Naive thymus-derived CD4-positive, alpha-beta T cell (primary cell): ENCODE measurements at regions of chr16 and their contacts with region 1.

Region 1: DNA sequence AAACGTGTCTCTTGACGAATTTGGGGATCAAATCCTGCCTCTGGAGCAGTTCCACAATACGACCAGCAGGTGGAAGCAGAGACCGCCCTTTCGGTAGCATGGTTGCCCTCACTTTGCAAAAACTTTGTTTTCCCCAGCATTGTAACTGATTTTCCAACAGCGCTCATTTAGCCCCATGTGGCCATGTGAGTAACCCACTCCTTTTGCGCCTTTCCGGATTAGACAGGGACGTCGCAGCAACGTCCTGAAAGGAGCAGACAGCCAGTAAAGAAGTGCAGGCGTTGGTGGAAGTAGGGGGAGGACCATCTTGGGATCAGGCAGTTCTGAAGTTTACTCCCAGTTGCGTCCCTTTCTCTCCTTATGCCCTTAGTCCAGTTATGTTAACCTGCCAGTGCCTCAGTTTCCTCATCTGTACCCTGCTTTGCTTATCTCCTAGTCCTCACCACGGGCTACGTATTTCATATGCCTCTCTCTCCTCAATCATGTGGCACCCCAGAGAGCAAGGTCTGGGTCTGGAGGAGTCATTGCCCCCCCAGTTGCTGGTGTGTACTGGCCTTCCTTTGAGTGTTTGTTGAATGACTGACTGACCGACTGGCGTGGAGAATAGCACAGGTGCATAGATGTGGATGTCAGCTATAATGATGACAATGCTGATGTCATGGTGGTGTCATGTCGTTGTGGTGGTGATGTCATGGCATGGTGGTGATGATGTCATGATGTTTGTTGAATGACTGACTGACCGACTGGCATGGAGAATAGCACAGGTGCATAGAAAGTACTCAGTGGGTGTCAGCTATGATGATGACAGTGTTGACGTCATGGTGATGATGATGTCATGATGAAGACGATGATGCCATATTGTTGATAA is 22.3 kb downstream of the TMEM114 start:
- DNase-seq: peak; percentile 53 to 86 (median 79)
- ATAC-seq: peak; percentile 97
- H3K4me3 ChIP-seq: no peak overlapping the region
- H3K4me3 Mint-ChIP-seq: no peak overlapping the region
- H3K27ac ChIP-seq: no peak overlapping the region
- H3K27ac Mint-ChIP-seq: peak overlapping the region in 7 of 9 donors; percentile 10 to 69 (median 60)
- H3K4me1 ChIP-seq: no peaks in the 10 kb centered on the region
- H3K4me1 Mint-ChIP-seq: peaks cover 0 to 8% (median 4%) of the 10 kb centered on the region in 7 donors
- H3K27me3 ChIP-seq: no peaks in the 10 kb centered on the region
- H3K27me3 Mint-ChIP-seq: peaks cover 4 to 19% (median 11%) of the 10 kb centered on the region in 5 donors

Region 2: DNA sequence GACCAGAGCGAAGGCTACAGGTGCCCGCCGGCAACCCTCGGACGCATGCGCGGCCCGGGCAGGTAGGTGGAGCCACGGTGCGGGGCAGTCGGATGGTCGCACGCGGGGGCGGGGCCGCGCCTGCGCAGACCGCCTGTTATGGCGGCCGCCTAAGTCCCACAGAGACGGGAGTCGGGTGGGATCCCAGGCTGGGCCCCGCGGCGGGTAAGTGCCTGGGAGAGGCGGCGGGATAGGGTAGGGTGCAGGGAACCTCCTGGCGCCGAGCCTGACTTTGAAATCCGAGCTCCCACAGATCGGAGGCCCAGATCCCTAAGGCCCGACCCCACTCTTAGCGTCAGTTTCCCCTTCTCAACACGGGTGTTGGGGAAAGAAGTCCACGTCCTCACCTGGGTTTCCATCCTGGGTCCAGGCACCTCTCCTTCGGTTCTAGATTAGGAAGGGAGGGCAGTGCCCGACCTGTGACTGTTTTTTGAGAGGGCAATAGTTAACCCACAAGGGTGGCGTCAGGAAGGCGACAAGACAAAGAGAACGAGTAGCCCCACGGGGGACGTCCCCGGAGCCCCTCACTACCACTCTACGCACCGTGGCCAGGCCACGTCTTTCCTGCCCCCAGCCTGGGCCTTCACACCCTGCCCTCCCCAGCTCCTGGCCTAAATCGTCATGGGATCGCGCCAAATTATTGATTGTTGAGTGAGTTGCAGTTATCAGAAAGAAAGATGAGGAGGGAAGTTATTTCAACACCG is 53.8 kb after region 1 on chr16 and contains the start of gene METTL22:
- CTCF ChIA-PET with region 1: interaction called, 3 read pairs
- POLR2A ChIA-PET with region 1: no interaction called
- intact Hi-C with region 1: loop called in 1 of 2 experiments (anchors 1 kb)
- DNase-seq: peak; percentile 83 to 98 (median 90)
- ATAC-seq: peak; percentile 99
- H3K4me3 ChIP-seq: peak within 1 kb of the TSS; percentile 97
- H3K4me3 Mint-ChIP-seq: peak within 1 kb of the TSS; percentile 93 to 100 (median 95)
- H3K27ac ChIP-seq: peak within 1 kb of the TSS; percentile 92
- H3K27ac Mint-ChIP-seq: peak within 1 kb of the TSS; percentile 75 to 93 (median 87)
- H3K4me1 ChIP-seq: peaks cover 7 to 10% of the 10 kb centered on the region in 2 donors
- H3K4me1 Mint-ChIP-seq: peaks cover 17 to 40% (median 26%) of the 10 kb centered on the region in 7 donors
- H3K27me3 ChIP-seq: no peaks in the 10 kb centered on the region
- H3K27me3 Mint-ChIP-seq: peaks cover 0 to 17% (median 6%) of the 10 kb centered on the region in 5 donors
- total RNA-seq, gene METTL22: 28.9 to 59.4 (median 48.9) TPM

Region 3: GRCh38 chr16:8655184-8655717 is 87.3 kb after region 1 on chr16:
- CTCF ChIA-PET with region 1: no interaction called
- POLR2A ChIA-PET with region 1: no interaction called
- intact Hi-C with region 1: loop called (anchors 1 kb)
- DNase-seq: no peak
- ATAC-seq: peak; percentile 73
- H3K4me3 ChIP-seq: no peak overlapping the region
- H3K4me3 Mint-ChIP-seq: no peak overlapping the region
- H3K27ac ChIP-seq: no peak overlapping the region
- H3K27ac Mint-ChIP-seq: no peak overlapping the region
- H3K4me1 ChIP-seq: no peaks in the 10 kb centered on the region
- H3K4me1 Mint-ChIP-seq: no peaks in the 10 kb centered on the region
- H3K27me3 ChIP-seq: no peaks in the 10 kb centered on the region
- H3K27me3 Mint-ChIP-seq: no peaks in the 10 kb centered on the region

Region 4: DNA sequence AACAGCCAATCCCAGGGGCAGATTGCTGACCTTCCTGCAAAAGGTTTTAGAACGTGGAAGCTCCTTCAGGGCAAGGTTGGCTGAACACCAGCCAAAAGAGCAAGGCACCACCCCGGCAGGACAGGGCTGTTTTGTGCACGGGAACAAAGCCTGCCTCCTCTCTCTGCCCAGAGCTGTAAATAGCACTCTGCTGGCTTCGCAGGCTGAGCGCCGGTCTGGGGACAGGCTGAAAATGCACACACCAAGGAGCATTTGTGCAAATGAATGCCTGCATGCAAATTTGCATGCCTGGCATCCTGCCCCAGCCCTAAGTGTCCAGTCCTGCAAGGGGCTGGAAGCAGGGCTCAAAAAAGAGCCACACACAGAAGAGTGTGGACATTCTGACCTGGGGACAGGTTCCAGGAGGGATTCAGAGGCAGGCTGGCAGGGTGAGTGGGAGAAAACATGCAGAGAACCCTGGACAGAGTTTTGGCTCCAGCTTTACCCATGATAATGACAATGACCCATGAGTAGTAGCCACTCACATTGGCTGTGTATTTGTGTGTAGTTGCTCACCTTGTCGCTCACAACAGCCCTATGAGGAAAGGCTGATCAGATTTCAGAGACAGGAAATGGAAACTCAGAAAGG is 118.1 kb after region 1 on chr16:
- CTCF ChIA-PET with region 1: no interaction called
- POLR2A ChIA-PET with region 1: no interaction called
- intact Hi-C with region 1: no loop called
- DNase-seq: no peak
- ATAC-seq: no peak
- H3K4me3 ChIP-seq: no peak overlapping the region
- H3K4me3 Mint-ChIP-seq: no peak overlapping the region
- H3K27ac ChIP-seq: no peak overlapping the region
- H3K27ac Mint-ChIP-seq: no peak overlapping the region
- H3K4me1 ChIP-seq: no peaks in the 10 kb centered on the region
- H3K4me1 Mint-ChIP-seq: peaks cover 0 to 5% (median 2%) of the 10 kb centered on the region in 7 donors
- H3K27me3 ChIP-seq: no peaks in the 10 kb centered on the region
- H3K27me3 Mint-ChIP-seq: no peaks in the 10 kb centered on the region

Region 5: DNA sequence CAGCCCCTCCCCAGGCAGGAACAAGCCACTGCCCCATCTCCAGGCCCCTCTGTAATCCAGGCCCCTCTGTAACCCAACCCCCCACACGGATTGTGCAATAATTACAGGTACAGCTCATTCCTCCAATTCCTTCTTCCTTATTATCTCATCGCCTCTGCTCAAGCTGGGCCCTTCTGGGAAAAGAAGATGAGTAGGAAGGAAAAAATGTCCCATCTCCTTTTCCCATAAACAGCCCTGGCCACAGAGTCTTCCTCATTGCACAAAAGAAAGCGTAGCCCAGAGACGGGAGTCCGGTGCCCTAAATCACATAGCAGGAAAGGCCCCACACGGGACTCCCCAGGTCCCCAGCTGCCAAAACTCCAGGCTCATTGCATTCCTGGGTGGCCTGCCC is 310.5 kb after region 1 on chr16:
- CTCF ChIA-PET with region 1: interaction called, 26 read pairs
- POLR2A ChIA-PET with region 1: no interaction called
- intact Hi-C with region 1: loop called (anchors 1 kb)
- DNase-seq: no peak
- ATAC-seq: no peak
- H3K4me3 ChIP-seq: no peak overlapping the region
- H3K4me3 Mint-ChIP-seq: no peak overlapping the region
- H3K27ac ChIP-seq: no peak overlapping the region
- H3K27ac Mint-ChIP-seq: no peak overlapping the region
- H3K4me1 ChIP-seq: no peaks in the 10 kb centered on the region
- H3K4me1 Mint-ChIP-seq: peaks cover 0 to 23% (median 11%) of the 10 kb centered on the region in 7 donors
- H3K27me3 ChIP-seq: no peaks in the 10 kb centered on the region
- H3K27me3 Mint-ChIP-seq: no peaks in the 10 kb centered on the region

Region 6: GRCh38 chr16:9134739-9135138 is 566.8 kb after region 1 on chr16:
- CTCF ChIA-PET with region 1: interaction called, 5 read pairs
- POLR2A ChIA-PET with region 1: no interaction called
- intact Hi-C with region 1: loop called (anchors 1 to 2 kb)
- DNase-seq: peak; percentile 21 to 63 (median 51)
- ATAC-seq: peak; percentile 78
- H3K4me3 ChIP-seq: no peak overlapping the region
- H3K4me3 Mint-ChIP-seq: no peak overlapping the region
- H3K27ac ChIP-seq: no peak overlapping the region
- H3K27ac Mint-ChIP-seq: peak overlapping the region in 1 of 9 donors; percentile 59
- H3K4me1 ChIP-seq: peaks cover 0 to 9% of the 10 kb centered on the region in 2 donors
- H3K4me1 Mint-ChIP-seq: peaks cover 10 to 24% (median 16%) of the 10 kb centered on the region in 7 donors
- H3K27me3 ChIP-seq: no peaks in the 10 kb centered on the region
- H3K27me3 Mint-ChIP-seq: peaks cover 0 to 10% (median 6%) of the 10 kb centered on the region in 5 donors